ENCODE measurements at regions of chr14 and their contacts with region 1.

Region 1: GRCh38 chr14:90301668-90302090 is 30.1 kb downstream of the NRDE2 start:
- DNase-seq: peak; percentile 25
- H3K4me3 ChIP-seq: no peak overlapping the region
- H3K27ac ChIP-seq: no peak overlapping the region
- H3K4me1 ChIP-seq: no peaks in the 10 kb centered on the region
- H3K27me3 ChIP-seq: no peaks in the 10 kb centered on the region
- CTCF ChIP-seq: peak; percentile 35 to 56

Region 2: GRCh38 chr14:90518941-90519256 is 217.2 kb after region 1 on chr14:
- CTCF ChIA-PET with region 1: no interaction called
- dilution Hi-C with region 1: no loop called
- in situ Hi-C with region 1: no loop called
- intact Hi-C with region 1: loop called (anchors 2 kb)
- DNase-seq: no peak
- H3K4me3 ChIP-seq: no peak overlapping the region
- H3K27ac ChIP-seq: no peak overlapping the region
- H3K4me1 ChIP-seq: peaks cover 17% of the 10 kb centered on the region
- H3K27me3 ChIP-seq: no peaks in the 10 kb centered on the region
- CTCF ChIP-seq: peak; percentile 46 to 62

Region 3: GRCh38 chr14:90697577-90698206 is 396.0 kb after region 1 on chr14:
- CTCF ChIA-PET with region 1: interaction called, 8 read pairs
- dilution Hi-C with region 1: no loop called
- in situ Hi-C with region 1: loop called (anchors 10 kb)
- intact Hi-C with region 1: loop called (anchors 1 kb)
- DNase-seq: peak; percentile 62
- H3K4me3 ChIP-seq: no peak overlapping the region
- H3K27ac ChIP-seq: no peak overlapping the region
- H3K4me1 ChIP-seq: no peaks in the 10 kb centered on the region
- H3K27me3 ChIP-seq: no peaks in the 10 kb centered on the region
- CTCF ChIP-seq: peak; percentile 94 to 95

Region 4: GRCh38 chr14:90758028-90758889 is 456.6 kb after region 1 on chr14:
- CTCF ChIA-PET with region 1: no interaction called
- dilution Hi-C with region 1: no loop called
- in situ Hi-C with region 1: no loop called
- intact Hi-C with region 1: loop called (anchors 1 kb)
- DNase-seq: peak; percentile 88
- H3K4me3 ChIP-seq: peak overlapping the region; percentile 44 to 53 (median 45)
- H3K27ac ChIP-seq: peak overlapping the region; percentile 55
- H3K4me1 ChIP-seq: peaks cover 7% of the 10 kb centered on the region
- H3K27me3 ChIP-seq: no peaks in the 10 kb centered on the region
- CTCF ChIP-seq: peak; percentile 57 to 90